Heart left ventricle (tissue), 16 donors: ENCODE measurements at regions of chr1 and their contacts with region 1.

Region 1: GRCh38 chr1:54705153-54705552 is 10.5 kb upstream of the TTC4 start:
- DNase-seq: no peak
- ATAC-seq: no peak
- H3K4me3 ChIP-seq: no peak overlapping the region
- H3K27ac ChIP-seq: no peak overlapping the region
- H3K4me1 ChIP-seq: no peaks in the 10 kb centered on the region
- H3K27me3 ChIP-seq: no peaks in the 10 kb centered on the region
- CTCF ChIP-seq: no peak
- POLR2A ChIP-seq: no peak

Region 2: DNA sequence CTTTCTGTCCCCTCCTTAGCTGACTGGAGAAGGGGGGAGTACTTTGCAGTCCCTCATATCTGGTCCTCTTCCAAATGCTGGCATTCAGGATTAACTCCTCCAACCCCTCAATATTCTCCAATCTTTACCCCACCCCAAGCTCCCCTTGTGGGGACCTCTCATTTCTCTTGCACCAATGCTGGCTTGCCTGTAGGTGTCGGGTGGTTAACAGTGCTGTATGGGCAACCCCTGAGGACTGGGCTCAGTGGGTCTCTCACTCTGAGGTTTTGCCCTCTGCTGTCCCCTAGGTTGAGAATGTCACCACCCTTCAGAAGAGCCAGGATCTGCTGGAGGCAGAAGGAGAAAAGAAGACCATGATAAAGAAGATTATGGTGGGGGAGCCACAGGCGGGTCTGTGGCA is 36.6 kb before region 1 on chr1:
- intact Hi-C with region 1: no loop called
- DNase-seq: no peak
- ATAC-seq: no peak
- H3K4me3 ChIP-seq: no peak overlapping the region
- H3K27ac ChIP-seq: no peak overlapping the region
- H3K4me1 ChIP-seq: peaks cover 0 to 5% (median 0%) of the 10 kb centered on the region in 12 donors
- H3K27me3 ChIP-seq: no peaks in the 10 kb centered on the region
- CTCF ChIP-seq: no peak
- POLR2A ChIP-seq: no peak

Region 3: GRCh38 chr1:54728027-54728426 is 22.9 kb after region 1 on chr1:
- intact Hi-C with region 1: loop called in 1 of 10 experiments (anchors 2 kb)
- DNase-seq: no peak
- ATAC-seq: no peak
- H3K4me3 ChIP-seq: no peak overlapping the region
- H3K27ac ChIP-seq: no peak overlapping the region
- H3K4me1 ChIP-seq: no peaks in the 10 kb centered on the region
- H3K27me3 ChIP-seq: no peaks in the 10 kb centered on the region
- CTCF ChIP-seq: no peak
- POLR2A ChIP-seq: no peak